Sigmoid colon (tissue), 7 donors: ENCODE measurements at regions of chr10 and their contacts with region 1.

Region 1: GRCh38 chr10:12685261-12686058 is 316.1 kb downstream of the CCDC3 start:
- DNase-seq: no peak
- H3K4me3 ChIP-seq: no peak overlapping the region
- H3K27ac ChIP-seq: no peak overlapping the region
- H3K4me1 ChIP-seq: peaks cover 0 to 26% (median 21%) of the 10 kb centered on the region in 4 donors
- H3K27me3 ChIP-seq: no peaks in the 10 kb centered on the region
- CTCF ChIP-seq: no peak
- EP300 ChIP-seq: no peak
- POLR2A ChIP-seq: no peak

Region 2: GRCh38 chr10:12605580-12606405 is 79.7 kb before region 1 on chr10:
- intact Hi-C with region 1: loop called (anchors 5 kb)
- DNase-seq: peak; percentile 95
- H3K4me3 ChIP-seq: peak overlapping the region; percentile 20 to 46 (median 40)
- H3K27ac ChIP-seq: peak overlapping the region; percentile 83 to 86 (median 85)
- H3K4me1 ChIP-seq: peaks cover 0 to 47% (median 27%) of the 10 kb centered on the region in 4 donors
- H3K27me3 ChIP-seq: no peaks in the 10 kb centered on the region
- CTCF ChIP-seq: no peak
- EP300 ChIP-seq: peak in 1 of 4 donors; percentile 39
- POLR2A ChIP-seq: no peak